Vagina (tissue), 2 donors: ENCODE measurements at regions of chr6 and their contacts with region 1.

Region 1: GRCh38 chr6:149431905-149432775 is 32.1 kb downstream of the SUMO4 start:
- DNase-seq: no peak
- H3K4me3 ChIP-seq: no peak overlapping the region
- H3K27ac ChIP-seq: no peak overlapping the region
- H3K4me1 ChIP-seq: peaks cover 6% of the 10 kb centered on the region
- H3K27me3 ChIP-seq: no peaks in the 10 kb centered on the region
- CTCF ChIP-seq: peak; percentile 90 to 96 (median 93)
- POLR2A ChIP-seq: no peak

Region 2: DNA sequence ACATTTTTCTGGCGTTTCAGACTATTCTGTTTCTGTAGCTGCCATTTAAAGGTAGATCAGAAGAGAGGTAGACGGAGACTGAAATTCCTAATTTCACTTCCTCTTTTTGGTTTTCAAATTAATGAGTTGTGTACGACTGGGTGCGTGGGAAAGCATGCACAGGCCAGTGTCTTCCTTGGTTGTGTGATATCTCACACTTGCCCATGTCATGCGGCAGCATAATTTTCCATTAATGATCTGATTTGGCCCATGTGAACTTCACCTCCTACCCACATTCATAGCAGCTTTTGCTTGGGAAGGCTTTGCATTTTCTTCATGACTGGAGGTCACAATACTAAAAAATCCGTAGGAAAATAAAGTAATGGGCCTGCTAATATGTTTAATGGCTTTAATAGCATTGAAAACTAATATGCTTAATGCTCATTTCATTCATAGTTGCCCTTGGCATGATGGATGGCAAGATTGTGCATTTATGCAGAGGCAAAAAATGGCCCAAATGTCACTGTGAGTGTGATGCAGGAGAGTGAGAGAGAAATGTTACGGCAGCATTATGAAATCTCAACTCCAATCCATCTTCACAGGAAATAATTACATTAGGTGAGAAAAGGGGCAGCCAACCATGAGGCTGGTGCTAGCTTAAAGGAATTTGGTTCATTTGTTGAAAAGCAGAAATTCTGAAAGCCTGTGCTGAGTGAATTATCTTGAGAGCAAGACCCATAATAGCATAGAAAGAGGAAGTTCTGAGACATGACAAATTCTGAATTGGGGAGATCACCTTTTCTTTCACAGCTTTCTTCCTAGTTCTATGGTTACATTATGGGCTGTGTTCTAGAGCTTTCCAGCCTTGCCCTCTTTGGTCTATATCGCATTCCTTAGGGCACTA is 754.3 kb before region 1 on chr6:
- intact Hi-C with region 1: no loop called
- DNase-seq: no peak
- H3K4me3 ChIP-seq: no peak overlapping the region
- H3K27ac ChIP-seq: no peak overlapping the region
- H3K4me1 ChIP-seq: no peaks in the 10 kb centered on the region
- H3K27me3 ChIP-seq: no peaks in the 10 kb centered on the region
- CTCF ChIP-seq: no peak
- POLR2A ChIP-seq: no peak

Region 3: DNA sequence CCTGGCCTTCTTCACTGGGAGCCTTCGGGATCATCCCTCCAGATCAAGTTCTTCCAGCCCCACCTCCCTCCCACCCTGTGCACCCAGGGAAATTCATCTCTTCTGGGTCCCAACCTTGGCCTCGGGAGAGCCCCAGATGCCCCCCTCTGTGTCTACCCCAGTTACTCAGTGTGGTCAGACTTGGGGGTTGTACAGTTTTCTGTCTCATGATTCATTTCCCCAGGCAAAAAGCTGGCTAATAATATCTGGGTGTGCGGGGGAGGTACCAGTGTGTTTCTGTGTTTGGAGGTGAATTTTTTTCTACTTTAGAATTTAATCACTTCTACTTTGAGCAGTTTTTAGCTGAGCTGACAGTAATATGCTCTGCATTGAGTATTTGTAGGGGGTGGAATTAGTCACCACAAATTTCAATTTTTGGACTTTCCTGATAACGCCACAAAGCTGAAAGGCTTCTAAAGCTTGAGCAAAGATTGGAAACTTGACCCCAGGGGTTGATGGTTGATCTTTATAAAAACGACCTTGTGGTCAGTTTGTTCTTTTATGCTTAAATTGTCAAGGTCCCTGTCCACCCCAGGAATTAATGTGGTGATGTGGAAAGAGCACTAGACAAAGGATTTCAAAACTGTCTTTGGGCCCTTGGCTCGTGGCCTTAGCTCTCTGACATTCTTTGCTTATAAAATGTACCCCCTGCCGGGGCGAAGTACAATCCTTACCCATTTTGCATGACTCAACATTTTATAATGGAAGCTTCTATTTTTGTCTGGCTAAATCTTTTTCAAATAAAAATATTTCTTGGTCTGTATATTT is 399.3 kb before region 1 on chr6:
- intact Hi-C with region 1: loop called (anchors 5 kb)
- DNase-seq: no peak
- H3K4me3 ChIP-seq: no peak overlapping the region
- H3K27ac ChIP-seq: peak overlapping the region; percentile 82
- H3K4me1 ChIP-seq: peaks cover 46% of the 10 kb centered on the region
- H3K27me3 ChIP-seq: no peaks in the 10 kb centered on the region
- CTCF ChIP-seq: no peak
- POLR2A ChIP-seq: no peak

Region 4: GRCh38 chr6:149082286-149082707 is 349.8 kb before region 1 on chr6:
- intact Hi-C with region 1: loop called (anchors 5 kb)
- DNase-seq: no peak
- H3K4me3 ChIP-seq: no peak overlapping the region
- H3K27ac ChIP-seq: peak overlapping the region; percentile 18
- H3K4me1 ChIP-seq: peaks cover 34% of the 10 kb centered on the region
- H3K27me3 ChIP-seq: no peaks in the 10 kb centered on the region
- CTCF ChIP-seq: peak; percentile 35 to 80 (median 67)
- POLR2A ChIP-seq: no peak

Region 5: GRCh38 chr6:149473080-149474052 is 41.2 kb after region 1 on chr6:
- intact Hi-C with region 1: no loop called
- DNase-seq: no peak
- H3K4me3 ChIP-seq: no peak overlapping the region
- H3K27ac ChIP-seq: no peak overlapping the region
- H3K4me1 ChIP-seq: peaks cover 16% of the 10 kb centered on the region
- H3K27me3 ChIP-seq: no peaks in the 10 kb centered on the region
- CTCF ChIP-seq: no peak
- POLR2A ChIP-seq: no peak